ENCODE measurements at regions of chr7 and their contacts with region 1.

Region 1: GRCh38 chr7:105759670-105760550 is 116.5 kb downstream of the ATXN7L1 start:
- DNase-seq: peak; percentile 32
- ATAC-seq: peak; percentile 78 to 85

Region 2: GRCh38 chr7:105723572-105723971 is 36.3 kb before region 1 on chr7:
- intact Hi-C with region 1: no loop called
- DNase-seq: no peak
- ATAC-seq: no peak

Region 3: GRCh38 chr7:106009403-106010226 is 249.7 kb after region 1 on chr7:
- intact Hi-C with region 1: loop called in 1 of 2 experiments (anchors 2 kb)
- DNase-seq: peak; percentile 80
- ATAC-seq: peak; percentile 91 to 98

Region 4: GRCh38 chr7:106041140-106041717 is 281.3 kb after region 1 on chr7:
- intact Hi-C with region 1: loop called (anchors 2 to 5 kb)
- DNase-seq: no peak
- ATAC-seq: no peak

Region 5: DNA sequence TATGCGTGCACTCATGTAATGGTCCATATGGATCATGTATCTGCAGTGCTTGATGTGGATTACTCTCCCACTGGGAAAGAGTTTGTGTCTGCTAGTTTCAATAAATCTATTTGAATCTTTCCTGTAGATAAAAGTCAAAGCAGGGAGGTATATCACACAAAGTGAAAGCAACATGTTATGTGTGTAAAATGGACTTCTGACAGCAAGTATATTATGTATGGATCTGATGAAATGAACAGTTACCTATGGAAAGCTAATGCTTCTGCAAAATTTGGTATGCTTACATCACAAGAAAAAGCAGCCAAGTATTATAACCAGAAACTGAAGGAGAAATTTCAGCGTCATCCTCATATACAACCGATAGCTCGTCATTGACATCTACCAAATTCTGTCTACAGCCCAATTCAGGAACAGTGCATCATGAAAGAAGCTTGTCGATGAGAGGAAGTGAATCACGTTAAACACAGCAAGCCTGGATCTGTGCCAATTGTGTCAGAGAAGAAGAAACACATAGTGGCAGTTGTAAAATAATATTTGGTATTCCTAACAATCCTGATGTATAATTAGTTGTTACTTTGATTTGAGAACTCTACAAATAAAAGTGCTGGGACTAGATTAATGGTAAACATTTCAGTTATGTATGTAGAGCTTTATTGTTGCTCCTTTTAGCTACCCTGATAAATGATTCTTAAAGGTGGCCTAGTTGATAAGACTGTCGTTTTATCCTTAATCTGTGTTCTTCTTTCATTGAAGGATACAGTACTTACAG is 366.4 kb after region 1 on chr7:
- intact Hi-C with region 1: no loop called
- DNase-seq: no peak
- ATAC-seq: peak; percentile 23 to 31